Transverse colon (tissue), 4 donors: ENCODE measurements at regions of chr15 and their contacts with region 1.

Region 1: GRCh38 chr15:26983822-26984221 is 12.8 kb downstream of the GABRG3 start:
- DNase-seq: no peak
- H3K4me3 ChIP-seq: no peak overlapping the region
- H3K27ac ChIP-seq: no peak overlapping the region
- H3K4me1 ChIP-seq: no peaks in the 10 kb centered on the region
- H3K27me3 ChIP-seq: no peaks in the 10 kb centered on the region
- CTCF ChIP-seq: no peak
- EP300 ChIP-seq: no peak
- POLR2A ChIP-seq: no peak

Region 2: GRCh38 chr15:26882112-26882511 is 101.7 kb before region 1 on chr15:
- in situ Hi-C with region 1: no loop called
- intact Hi-C with region 1: no loop called
- DNase-seq: no peak
- H3K4me3 ChIP-seq: no peak overlapping the region
- H3K27ac ChIP-seq: no peak overlapping the region
- H3K4me1 ChIP-seq: no peaks in the 10 kb centered on the region
- H3K27me3 ChIP-seq: no peaks in the 10 kb centered on the region
- CTCF ChIP-seq: no peak
- EP300 ChIP-seq: no peak
- POLR2A ChIP-seq: no peak

Region 3: GRCh38 chr15:26937134-26937533 is 46.7 kb before region 1 on chr15:
- in situ Hi-C with region 1: no loop called
- intact Hi-C with region 1: no loop called
- DNase-seq: no peak
- H3K4me3 ChIP-seq: no peak overlapping the region
- H3K27ac ChIP-seq: no peak overlapping the region
- H3K4me1 ChIP-seq: no peaks in the 10 kb centered on the region
- H3K27me3 ChIP-seq: no peaks in the 10 kb centered on the region
- CTCF ChIP-seq: no peak
- EP300 ChIP-seq: no peak
- POLR2A ChIP-seq: no peak

Region 4: GRCh38 chr15:27046880-27047279 is 63.1 kb after region 1 on chr15:
- in situ Hi-C with region 1: no loop called
- intact Hi-C with region 1: loop called (anchors 2 kb)
- DNase-seq: no peak
- H3K4me3 ChIP-seq: no peak overlapping the region
- H3K27ac ChIP-seq: no peak overlapping the region
- H3K4me1 ChIP-seq: no peaks in the 10 kb centered on the region
- H3K27me3 ChIP-seq: no peaks in the 10 kb centered on the region
- CTCF ChIP-seq: no peak
- EP300 ChIP-seq: no peak
- POLR2A ChIP-seq: no peak